Vagina (tissue), 2 donors: ENCODE measurements at regions of chr6 and their contacts with region 1.

Region 1: GRCh38 chr6:32700391-32701040 is 34.1 kb upstream of the HLA-DQB1 start:
- DNase-seq: no peak
- H3K4me3 ChIP-seq: no peak overlapping the region
- H3K27ac ChIP-seq: no peak overlapping the region
- H3K4me1 ChIP-seq: no peaks in the 10 kb centered on the region
- H3K27me3 ChIP-seq: no peaks in the 10 kb centered on the region
- CTCF ChIP-seq: peak in 2 of 3 experiments; percentile 45 to 59
- POLR2A ChIP-seq: no peak

Region 2: GRCh38 chr6:32424589-32425300 is 275.8 kb before region 1 on chr6:
- intact Hi-C with region 1: loop called (anchors 5 kb)
- DNase-seq: no peak
- H3K4me3 ChIP-seq: no peak overlapping the region
- H3K27ac ChIP-seq: no peak overlapping the region
- H3K4me1 ChIP-seq: no peaks in the 10 kb centered on the region
- H3K27me3 ChIP-seq: no peaks in the 10 kb centered on the region
- CTCF ChIP-seq: no peak
- POLR2A ChIP-seq: no peak